ENCODE measurements at regions of chrX and their contacts with region 1.

Region 1: GRCh38 chrX:153927922-153928760 is 2.1 kb upstream of the ARHGAP4 start:
- DNase-seq: peak; percentile 91
- H3K4me3 Mint-ChIP-seq: peak overlapping the region; percentile 91
- H3K27ac Mint-ChIP-seq: peak overlapping the region; percentile 97
- H3K4me1 Mint-ChIP-seq: peaks cover 24% of the 10 kb centered on the region
- H3K27me3 Mint-ChIP-seq: no peaks in the 10 kb centered on the region

Region 2: GRCh38 chrX:153724252-153725040 is 203.7 kb before region 1 on chrX and contains the starts of genes ABCD1 and BCAP31:
- intact Hi-C with region 1: loop called (anchors 2 kb)
- DNase-seq: peak; percentile 86
- H3K4me3 Mint-ChIP-seq: peak within 1 kb of the TSS; percentile 92
- H3K27ac Mint-ChIP-seq: peak within 1 kb of the TSS; percentile 85
- H3K4me1 Mint-ChIP-seq: peaks cover 17% of the 10 kb centered on the region
- H3K27me3 Mint-ChIP-seq: no peaks in the 10 kb centered on the region
- total RNA-seq, gene ABCD1: 8.4 TPM in 2 replicates
- total RNA-seq, gene BCAP31: 156 and 166 TPM in 2 replicates

Region 3: GRCh38 chrX:153794018-153794896 is 133.9 kb before region 1 on chrX and contains the starts of genes IDH3G and SSR4:
- intact Hi-C with region 1: loop called (anchors 1 kb)
- DNase-seq: peak; percentile 91
- H3K4me3 Mint-ChIP-seq: peak within 1 kb of the TSS; percentile 96
- H3K27ac Mint-ChIP-seq: peak within 1 kb of the TSS; percentile 94
- H3K4me1 Mint-ChIP-seq: peaks cover 18% of the 10 kb centered on the region
- H3K27me3 Mint-ChIP-seq: no peaks in the 10 kb centered on the region
- total RNA-seq, gene IDH3G: 68.4 and 69.7 TPM in 2 replicates
- total RNA-seq, gene SSR4: 281 and 285 TPM in 2 replicates

Region 4: GRCh38 chrX:153947009-153947769 is 19.0 kb after region 1 on chrX:
- intact Hi-C with region 1: loop called (anchors 1 kb)
- DNase-seq: peak; percentile 67
- H3K4me3 Mint-ChIP-seq: peak overlapping the region; percentile 3
- H3K27ac Mint-ChIP-seq: peak overlapping the region; percentile 91
- H3K4me1 Mint-ChIP-seq: peaks cover 9% of the 10 kb centered on the region
- H3K27me3 Mint-ChIP-seq: no peaks in the 10 kb centered on the region

Region 5: DNA sequence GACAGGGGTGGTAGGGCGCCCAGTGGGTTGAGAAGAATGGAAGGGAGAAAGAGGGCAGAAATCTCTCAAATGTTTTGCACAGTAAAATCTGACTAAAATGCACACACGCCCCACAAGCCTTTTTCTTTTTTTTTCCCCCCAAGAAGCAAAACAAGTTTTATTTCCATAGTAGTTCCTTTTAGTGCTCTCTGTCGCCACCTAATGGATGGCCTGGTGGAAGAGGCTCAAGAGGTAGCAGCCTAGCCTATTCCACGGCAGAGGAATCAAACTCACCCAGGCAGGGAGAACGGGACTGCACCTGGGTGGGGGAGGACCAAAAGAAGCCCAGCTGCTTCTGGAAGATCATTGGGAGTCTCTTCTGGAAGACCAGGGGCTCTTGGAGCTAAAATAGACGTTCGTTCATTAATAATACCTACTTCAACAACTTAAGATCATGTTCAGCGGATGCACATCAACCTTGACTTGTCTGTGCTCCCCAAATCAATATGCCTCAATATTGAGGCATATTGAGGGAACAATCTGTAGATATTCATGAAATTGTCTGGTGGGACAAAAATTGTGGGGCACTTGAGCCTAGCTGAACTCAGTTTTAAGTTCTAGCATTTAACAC is 123.2 kb after region 1 on chrX:
- intact Hi-C with region 1: loop called (anchors 2 kb)
- DNase-seq: peak; percentile 46
- H3K4me3 Mint-ChIP-seq: no peak overlapping the region
- H3K27ac Mint-ChIP-seq: peak overlapping the region; percentile 53
- H3K4me1 Mint-ChIP-seq: peaks cover 9% of the 10 kb centered on the region
- H3K27me3 Mint-ChIP-seq: no peaks in the 10 kb centered on the region

Region 6: GRCh38 chrX:154298312-154298711 is 370.2 kb after region 1 on chrX:
- intact Hi-C with region 1: no loop called
- DNase-seq: no peak
- H3K4me3 Mint-ChIP-seq: no peak overlapping the region
- H3K27ac Mint-ChIP-seq: no peak overlapping the region
- H3K4me1 Mint-ChIP-seq: no peaks in the 10 kb centered on the region
- H3K27me3 Mint-ChIP-seq: peaks cover 4% of the 10 kb centered on the region

Region 7: DNA sequence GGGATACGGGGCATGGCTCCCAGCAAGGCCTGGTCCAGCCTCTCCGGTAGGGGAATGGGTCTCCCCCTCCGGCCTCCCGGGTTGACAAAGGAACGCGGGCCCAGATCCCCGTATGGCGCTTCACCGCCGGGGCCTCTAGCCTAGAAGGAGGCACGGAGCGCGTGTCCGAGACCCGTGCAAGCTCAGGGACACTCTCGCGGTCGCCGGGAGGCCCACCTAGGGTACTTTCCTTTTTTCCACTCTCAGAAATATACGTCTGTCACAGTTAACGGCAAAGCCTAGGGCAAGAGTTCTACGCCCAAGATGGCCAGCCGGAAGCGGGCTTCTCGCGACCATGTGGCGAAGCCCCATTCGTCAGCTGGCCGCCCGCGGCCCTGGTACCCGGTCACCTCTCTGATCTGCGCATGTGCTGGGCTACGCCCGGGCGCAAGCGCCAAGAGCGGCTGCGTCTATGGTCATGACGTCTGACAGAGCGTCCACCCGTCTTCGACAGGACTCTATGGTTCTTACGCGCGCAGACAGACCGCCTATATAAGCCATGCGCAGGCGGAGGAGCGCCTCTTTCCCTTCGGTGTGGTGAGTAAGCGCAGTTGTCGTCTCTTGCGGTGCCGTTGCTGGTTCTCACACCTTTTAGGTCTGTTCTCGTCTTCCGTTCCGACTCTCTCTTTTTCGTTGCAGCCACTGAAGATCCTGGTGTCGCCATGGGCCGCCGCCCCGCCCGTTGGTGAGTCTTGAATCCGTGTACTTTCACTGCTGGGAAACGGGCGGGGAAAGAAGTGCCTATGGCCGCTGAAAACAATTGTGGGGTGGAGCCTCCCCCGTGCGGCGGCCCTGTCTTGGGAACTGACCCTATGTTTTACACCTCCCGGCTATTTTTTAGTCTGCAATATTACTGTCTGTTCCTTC is 469.9 kb after region 1 on chrX and contains the start of gene RPL10:
- intact Hi-C with region 1: loop called (anchors 10 kb)
- DNase-seq: peak; percentile 91
- H3K4me3 Mint-ChIP-seq: peak within 1 kb of the TSS; percentile 98
- H3K27ac Mint-ChIP-seq: peak within 1 kb of the TSS; percentile 99
- H3K4me1 Mint-ChIP-seq: peaks cover 8% of the 10 kb centered on the region
- H3K27me3 Mint-ChIP-seq: no peaks in the 10 kb centered on the region
- total RNA-seq, gene RPL10: 2,208 and 2,261 TPM in 2 replicates